ENCODE measurements at regions of chr13 and their contacts with region 1.

Region 1: GRCh38 chr13:98565726-98566565 is 11.0 kb downstream of the STK24 start:
- DNase-seq: peak in 2 of 3 donors; percentile 76 to 78
- ATAC-seq: peak; percentile 66 to 75 (median 74)
- H3K4me3 ChIP-seq: peak overlapping the region in 1 of 3 donors; percentile 19
- H3K27ac ChIP-seq: peak overlapping the region; percentile 60 to 82 (median 74)
- H3K4me1 ChIP-seq: peaks cover 0 to 55% (median 30%) of the 10 kb centered on the region in 4 donors
- H3K27me3 ChIP-seq: no peaks in the 10 kb centered on the region
- CTCF ChIP-seq: peak in 1 of 4 donors; percentile 17
- POLR2A ChIP-seq: peak; percentile 44

Region 2: GRCh38 chr13:98484289-98485219 is 81.4 kb before region 1 on chr13:
- intact Hi-C with region 1: loop called in 1 of 2 experiments (anchors 10 kb)
- DNase-seq: peak; percentile 70 to 83 (median 74)
- ATAC-seq: peak; percentile 60 to 78 (median 72)
- H3K4me3 ChIP-seq: no peak overlapping the region
- H3K27ac ChIP-seq: peak overlapping the region; percentile 67 to 91 (median 79)
- H3K4me1 ChIP-seq: peaks cover 0 to 65% (median 31%) of the 10 kb centered on the region in 4 donors
- H3K27me3 ChIP-seq: no peaks in the 10 kb centered on the region
- CTCF ChIP-seq: no peak
- POLR2A ChIP-seq: no peak